ENCODE measurements at regions of chr16 and their contacts with region 1.

Region 1: DNA sequence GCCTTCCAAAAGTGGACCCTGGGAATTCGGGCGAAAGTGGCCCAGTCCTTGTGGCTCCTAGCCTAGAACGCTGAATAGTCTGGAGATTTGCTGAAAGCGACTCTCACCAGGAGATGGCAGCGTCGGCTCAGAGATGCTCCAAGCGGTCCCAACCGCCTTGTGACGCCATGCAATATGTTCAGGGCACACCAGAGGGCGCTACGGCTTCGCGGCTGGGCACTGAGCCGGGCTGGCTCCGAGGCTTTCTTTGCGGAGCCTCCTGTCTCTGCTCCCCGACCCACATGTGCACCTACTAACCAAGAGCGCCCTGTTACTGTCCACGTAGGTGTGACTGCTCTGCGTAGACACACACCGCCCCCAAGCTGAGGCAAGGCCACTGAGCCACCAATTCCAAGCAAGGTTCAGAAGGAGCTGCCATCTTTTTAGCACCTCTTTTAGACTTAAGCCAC is 36.9 kb downstream of the SYCE1L start:
- DNase-seq: peak; percentile 87
- H3K4me3 ChIP-seq: no peak overlapping the region
- H3K27ac ChIP-seq: no peak overlapping the region
- H3K4me1 ChIP-seq: no peaks in the 10 kb centered on the region
- H3K27me3 ChIP-seq: no peaks in the 10 kb centered on the region
- CTCF ChIP-seq: peak; percentile 97

Region 2: GRCh38 chr16:77584205-77584859 is 348.2 kb after region 1 on chr16:
- intact Hi-C with region 1: loop called (anchors 1 kb)
- DNase-seq: peak; percentile 34
- H3K4me3 ChIP-seq: no peak overlapping the region
- H3K27ac ChIP-seq: no peak overlapping the region
- H3K4me1 ChIP-seq: no peaks in the 10 kb centered on the region
- H3K27me3 ChIP-seq: no peaks in the 10 kb centered on the region
- CTCF ChIP-seq: peak; percentile 81

Region 3: GRCh38 chr16:77660311-77660710 is 424.2 kb after region 1 on chr16:
- intact Hi-C with region 1: loop called (anchors 5 kb)
- DNase-seq: no peak
- H3K4me3 ChIP-seq: no peak overlapping the region
- H3K27ac ChIP-seq: no peak overlapping the region
- H3K4me1 ChIP-seq: no peaks in the 10 kb centered on the region
- H3K27me3 ChIP-seq: no peaks in the 10 kb centered on the region
- CTCF ChIP-seq: peak; percentile 17